PC-9 (cell line): ENCODE measurements at regions of chr10 and their contacts with region 1.

Region 1: GRCh38 chr10:9302120-9302746 is 1247.7 kb downstream of the GATA3 start:
- DNase-seq: peak in 1 of 2 experiments; percentile 61
- H3K4me3 ChIP-seq: no peak overlapping the region
- H3K27ac ChIP-seq: no peak overlapping the region
- H3K4me1 ChIP-seq: peaks cover 8% of the 10 kb centered on the region; the same call in 1 of the 2 replicates
- H3K27me3 ChIP-seq: no peaks in the 10 kb centered on the region
- CTCF ChIP-seq: peak; percentile 72

Region 2: GRCh38 chr10:7432884-7433726 is 1869.1 kb before region 1 on chr10:
- CTCF ChIA-PET with region 1: no interaction called
- POLR2A ChIA-PET with region 1: no interaction called
- intact Hi-C with region 1: loop called (anchors 5 kb)
- DNase-seq: no peak
- H3K4me3 ChIP-seq: no peak overlapping the region
- H3K27ac ChIP-seq: no peak overlapping the region
- H3K4me1 ChIP-seq: no peaks in the 10 kb centered on the region
- H3K27me3 ChIP-seq: peaks cover 29% of the 10 kb centered on the region
- CTCF ChIP-seq: no peak

Region 3: DNA sequence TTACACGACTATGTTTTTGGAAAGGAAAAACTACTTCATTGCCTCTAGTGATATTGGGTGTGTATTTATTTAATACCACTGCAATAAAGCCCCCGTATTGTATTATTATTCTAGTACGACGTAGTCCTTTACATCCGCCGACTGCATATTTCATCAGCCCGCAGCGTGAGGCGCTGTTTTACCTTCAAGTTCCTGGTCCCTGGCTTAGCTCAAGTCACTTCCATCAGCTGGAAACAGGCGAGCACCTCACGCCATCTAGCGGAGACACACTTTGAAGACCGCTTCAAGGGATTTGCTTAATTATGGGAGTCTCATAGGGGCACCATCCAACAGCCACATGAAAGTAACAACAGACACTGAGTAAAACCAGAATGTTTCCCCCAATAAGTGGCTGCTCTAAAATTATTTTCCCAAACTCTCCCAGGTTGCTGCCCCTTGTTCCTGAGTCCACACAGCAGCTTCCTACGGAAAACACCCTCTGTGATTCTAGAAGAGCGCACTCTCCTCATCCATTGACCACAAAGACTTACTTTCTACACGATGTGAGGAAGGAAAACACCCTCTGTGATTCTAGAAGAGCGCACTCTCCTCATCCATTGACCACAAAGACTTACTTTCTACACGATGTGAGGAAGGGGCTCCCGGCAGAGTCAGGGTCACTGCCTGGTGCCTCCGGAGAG is 1614.9 kb before region 1 on chr10:
- CTCF ChIA-PET with region 1: no interaction called
- POLR2A ChIA-PET with region 1: no interaction called
- intact Hi-C with region 1: loop called (anchors 5 kb)
- DNase-seq: peak; percentile 55 to 63
- H3K4me3 ChIP-seq: no peak overlapping the region
- H3K27ac ChIP-seq: no peak overlapping the region
- H3K4me1 ChIP-seq: no peaks in the 10 kb centered on the region
- H3K27me3 ChIP-seq: peaks cover 4% of the 10 kb centered on the region; the same call in 1 of the 2 replicates
- CTCF ChIP-seq: peak; percentile 71

Region 4: GRCh38 chr10:7872041-7872442 is 1430.2 kb before region 1 on chr10:
- CTCF ChIA-PET with region 1: interaction called, 3 read pairs
- POLR2A ChIA-PET with region 1: no interaction called
- intact Hi-C with region 1: loop called (anchors 1 kb)
- DNase-seq: peak in 1 of 2 experiments; percentile 5
- H3K4me3 ChIP-seq: peak overlapping the region; percentile 54; the same call in 1 of the 2 replicates
- H3K27ac ChIP-seq: no peak overlapping the region
- H3K4me1 ChIP-seq: peaks cover 8% of the 10 kb centered on the region
- H3K27me3 ChIP-seq: no peaks in the 10 kb centered on the region
- CTCF ChIP-seq: peak; percentile 74

Region 5: DNA sequence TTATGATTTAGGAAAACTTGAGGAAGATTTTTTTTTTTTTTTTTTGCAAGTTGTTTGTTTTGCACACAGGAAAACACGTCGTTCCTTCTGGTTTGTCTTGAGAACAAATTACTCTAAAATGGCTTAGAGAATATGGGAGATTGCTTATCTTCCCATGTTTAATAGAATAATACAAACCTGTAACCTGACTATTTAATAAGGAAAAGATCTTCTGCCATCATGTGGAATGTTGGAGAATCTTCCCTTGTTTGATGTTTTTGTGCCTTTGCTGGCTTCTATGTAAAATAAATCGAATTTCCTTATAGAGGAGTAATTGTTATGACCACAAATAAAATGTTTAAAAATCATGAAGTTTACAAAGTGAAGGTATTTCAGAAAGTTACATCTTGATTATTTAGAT is 428.9 kb before region 1 on chr10:
- CTCF ChIA-PET with region 1: no interaction called
- POLR2A ChIA-PET with region 1: no interaction called
- intact Hi-C with region 1: loop called (anchors 1 kb)
- DNase-seq: peak in 1 of 2 experiments; percentile 51
- H3K4me3 ChIP-seq: no peak overlapping the region
- H3K27ac ChIP-seq: peak overlapping the region; percentile 48
- H3K4me1 ChIP-seq: peaks cover 20% of the 10 kb centered on the region
- H3K27me3 ChIP-seq: no peaks in the 10 kb centered on the region
- CTCF ChIP-seq: peak; percentile 53; the same call in 1 of the 2 replicates

Region 6: DNA sequence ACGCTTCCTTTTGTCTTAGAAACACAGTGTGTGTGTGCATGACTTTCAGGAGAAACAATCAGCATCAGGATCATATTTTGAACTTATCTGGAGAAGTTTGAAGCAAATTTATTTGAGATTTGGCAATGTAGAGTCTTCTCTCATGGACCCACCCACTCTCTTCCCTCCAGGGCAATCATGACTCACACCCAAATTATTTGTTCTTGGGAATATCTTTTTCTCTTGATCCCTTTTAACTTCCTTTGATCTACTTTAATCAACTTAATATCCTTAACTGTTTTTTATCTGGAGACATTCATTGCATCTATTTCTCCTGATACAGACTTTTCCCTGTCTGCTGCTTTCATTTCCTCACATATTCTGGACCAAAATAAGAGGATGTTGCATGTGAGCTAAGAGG is 73.5 kb before region 1 on chr10:
- CTCF ChIA-PET with region 1: no interaction called
- POLR2A ChIA-PET with region 1: no interaction called
- intact Hi-C with region 1: loop called (anchors 5 kb)
- DNase-seq: peak in 1 of 2 experiments; percentile 37
- H3K4me3 ChIP-seq: no peak overlapping the region
- H3K27ac ChIP-seq: no peak overlapping the region
- H3K4me1 ChIP-seq: peaks cover 7% of the 10 kb centered on the region; the same call in 1 of the 2 replicates
- H3K27me3 ChIP-seq: no peaks in the 10 kb centered on the region
- CTCF ChIP-seq: no peak